Heart right ventricle (tissue), 16 donors: ENCODE measurements at regions of chr9 and their contacts with region 1.

Region 1: GRCh38 chr9:21730899-21731298 is 71.5 kb upstream of the MTAP start:
- DNase-seq: no peak
- ATAC-seq: no peak
- H3K4me3 ChIP-seq: no peak overlapping the region
- H3K27ac ChIP-seq: no peak overlapping the region
- H3K4me1 ChIP-seq: no peaks in the 10 kb centered on the region
- H3K27me3 ChIP-seq: peaks cover 0 to 5% (median 0%) of the 10 kb centered on the region in 7 donors
- CTCF ChIP-seq: no peak

Region 2: GRCh38 chr9:21677834-21678233 is 53.1 kb before region 1 on chr9:
- intact Hi-C with region 1: loop called in 1 of 10 experiments (anchors 10 kb)
- DNase-seq: no peak
- ATAC-seq: no peak
- H3K4me3 ChIP-seq: no peak overlapping the region
- H3K27ac ChIP-seq: no peak overlapping the region
- H3K4me1 ChIP-seq: no peaks in the 10 kb centered on the region
- H3K27me3 ChIP-seq: peaks cover 0 to 13% (median 3%) of the 10 kb centered on the region in 7 donors
- CTCF ChIP-seq: no peak

Region 3: DNA sequence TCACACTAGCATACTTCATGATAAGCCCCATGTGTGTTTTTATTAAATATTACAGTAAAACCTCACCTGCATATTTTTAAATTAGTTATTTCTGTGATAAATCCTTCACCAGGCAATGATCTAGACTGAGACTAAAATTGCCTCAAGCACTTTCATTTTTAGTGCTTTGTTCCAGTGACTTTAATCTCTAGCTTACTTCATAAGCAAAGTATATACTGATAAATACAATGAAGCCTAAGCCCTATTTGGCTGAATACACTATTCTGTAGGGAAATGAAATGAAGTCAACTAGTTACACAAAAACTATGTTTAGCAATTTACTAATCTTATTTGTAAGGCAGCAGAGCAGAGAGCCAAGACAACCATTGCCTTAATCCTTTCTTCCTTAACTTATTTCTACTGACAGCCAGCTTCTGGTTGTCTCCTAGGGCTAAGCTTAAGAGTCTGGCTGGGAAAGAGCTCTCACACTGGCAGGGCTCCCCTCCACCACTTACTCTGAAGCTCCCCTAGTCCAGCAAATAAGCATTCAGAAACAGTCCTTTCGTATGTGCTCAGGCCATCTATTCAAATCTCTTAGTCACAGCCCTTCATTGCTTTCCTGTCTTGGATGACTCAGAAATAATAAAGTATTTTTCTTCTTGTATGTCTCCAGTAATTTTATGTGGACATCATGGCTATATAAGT is 40.1 kb after region 1 on chr9:
- intact Hi-C with region 1: no loop called
- DNase-seq: no peak
- ATAC-seq: peak in 1 of 8 donors; percentile 33
- H3K4me3 ChIP-seq: no peak overlapping the region
- H3K27ac ChIP-seq: no peak overlapping the region
- H3K4me1 ChIP-seq: peaks cover 0 to 4% (median 0%) of the 10 kb centered on the region in 9 donors
- H3K27me3 ChIP-seq: peaks cover 0 to 19% (median 0%) of the 10 kb centered on the region in 7 donors
- CTCF ChIP-seq: no peak

Region 4: DNA sequence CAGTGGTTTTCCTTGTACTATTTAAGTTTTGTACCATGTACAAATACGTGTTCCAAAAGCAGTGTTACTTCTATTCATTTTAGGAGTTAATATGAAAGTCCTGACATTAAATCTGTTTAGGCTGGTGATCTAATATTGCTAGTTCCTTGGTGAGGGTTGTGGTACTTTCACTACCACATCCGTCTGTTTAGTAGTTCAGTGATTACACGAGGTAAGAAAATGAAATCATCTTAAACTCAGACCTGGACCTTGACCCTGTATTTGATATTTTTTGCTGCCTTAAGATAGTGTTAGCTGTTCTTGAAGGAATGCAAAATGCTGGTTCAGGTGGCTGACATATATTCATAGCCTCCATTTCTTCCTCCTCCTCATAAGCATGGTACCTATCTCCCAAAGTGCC is 121.9 kb after region 1 on chr9:
- intact Hi-C with region 1: no loop called
- DNase-seq: no peak
- ATAC-seq: no peak
- H3K4me3 ChIP-seq: no peak overlapping the region
- H3K27ac ChIP-seq: no peak overlapping the region
- H3K4me1 ChIP-seq: peaks cover 0 to 12% (median 0%) of the 10 kb centered on the region in 9 donors
- H3K27me3 ChIP-seq: no peaks in the 10 kb centered on the region
- CTCF ChIP-seq: no peak